ENCODE measurements at regions of chr13 and their contacts with region 1.

Region 1: GRCh38 chr13:79936368-79937136 is 404.4 kb downstream of the SPRY2 start:
- DNase-seq: peak; percentile 100
- H3K4me3 ChIP-seq: peak overlapping the region in 1 of 3 experiments; percentile 6
- H3K27ac ChIP-seq: peak overlapping the region; percentile 99
- H3K4me1 ChIP-seq: peaks cover 62% of the 10 kb centered on the region
- H3K27me3 ChIP-seq: no peaks in the 10 kb centered on the region
- CTCF ChIP-seq: no peak
- POLR2A ChIP-seq: no peak

Region 2: DNA sequence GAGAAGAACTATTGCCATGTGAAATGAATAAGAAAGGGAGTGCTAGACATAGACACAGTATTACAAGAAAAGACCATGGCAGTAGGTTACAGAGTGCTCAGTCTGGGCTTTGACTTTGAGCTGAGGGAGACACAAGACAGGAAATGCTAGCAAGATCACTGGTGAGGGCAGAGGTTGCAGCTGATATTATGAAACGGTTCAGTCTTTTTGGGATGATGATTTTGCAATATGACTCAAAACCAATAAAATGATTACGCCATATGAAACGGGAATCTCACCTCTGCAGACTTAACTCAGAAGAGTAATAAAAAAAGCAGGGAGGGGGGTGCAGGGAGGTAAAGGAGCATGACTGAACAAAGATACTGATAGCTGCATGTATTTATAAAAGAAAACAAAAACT is 653.6 kb before region 1 on chr13:
- CTCF ChIA-PET with region 1: no interaction called
- POLR2A ChIA-PET with region 1: no interaction called
- dilution Hi-C with region 1: no loop called
- intact Hi-C with region 1: no loop called
- DNase-seq: no peak
- H3K4me3 ChIP-seq: no peak overlapping the region
- H3K27ac ChIP-seq: no peak overlapping the region
- H3K4me1 ChIP-seq: no peaks in the 10 kb centered on the region
- H3K27me3 ChIP-seq: peaks cover 0 to 3% of the 10 kb centered on the region in 2 experiments
- CTCF ChIP-seq: no peak
- POLR2A ChIP-seq: no peak

Region 3: GRCh38 chr13:79724348-79725103 is 212.0 kb before region 1 on chr13:
- CTCF ChIA-PET with region 1: no interaction called
- POLR2A ChIA-PET with region 1: no interaction called
- dilution Hi-C with region 1: no loop called
- intact Hi-C with region 1: loop called (anchors 1 kb)
- DNase-seq: peak; percentile 93
- H3K4me3 ChIP-seq: no peak overlapping the region
- H3K27ac ChIP-seq: peak overlapping the region; percentile 24
- H3K4me1 ChIP-seq: peaks cover 3% of the 10 kb centered on the region
- H3K27me3 ChIP-seq: no peaks in the 10 kb centered on the region
- CTCF ChIP-seq: no peak
- POLR2A ChIP-seq: no peak

Region 4: DNA sequence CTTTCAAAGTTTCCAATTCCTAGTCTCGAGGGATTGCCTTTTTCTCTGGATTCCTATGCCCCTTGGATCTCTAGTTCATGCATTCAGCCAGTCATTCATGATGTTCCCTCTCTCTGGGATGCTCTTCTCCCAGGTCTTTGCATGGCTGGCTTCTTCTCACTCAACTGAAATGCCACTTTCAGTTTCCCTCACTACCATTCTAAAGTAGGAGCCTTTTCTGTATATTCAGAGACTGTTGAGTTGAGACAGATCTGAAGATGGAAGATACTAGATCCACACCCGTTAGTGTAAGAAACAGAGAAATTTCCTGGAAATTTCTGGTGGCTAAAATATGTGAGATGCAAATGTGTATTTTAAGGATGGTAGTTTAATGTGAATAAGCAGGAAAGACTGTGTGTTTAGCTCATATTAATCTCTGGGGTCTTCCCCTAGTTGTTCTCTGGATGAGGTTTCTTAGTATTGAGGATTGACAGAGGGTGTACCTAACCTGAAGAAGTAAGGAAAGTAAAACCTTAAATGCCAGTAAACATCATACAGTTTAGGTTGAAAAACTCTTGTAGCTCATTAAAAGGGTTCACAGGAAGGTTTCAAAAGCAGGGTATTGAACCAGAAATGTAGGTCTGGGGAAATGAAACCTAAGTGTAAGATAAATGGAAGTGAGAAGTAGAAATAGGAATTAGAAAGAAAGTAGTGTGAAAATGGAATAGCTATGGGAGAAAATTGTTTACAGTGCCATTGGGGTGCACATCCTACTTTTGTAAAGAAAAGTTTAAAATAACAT is 124.3 kb before region 1 on chr13:
- CTCF ChIA-PET with region 1: interaction called, 17 read pairs
- POLR2A ChIA-PET with region 1: interaction called, 11 read pairs
- dilution Hi-C with region 1: no loop called
- intact Hi-C with region 1: loop called (anchors 1 kb)
- DNase-seq: no peak
- H3K4me3 ChIP-seq: no peak overlapping the region
- H3K27ac ChIP-seq: no peak overlapping the region
- H3K4me1 ChIP-seq: peaks cover 27% of the 10 kb centered on the region
- H3K27me3 ChIP-seq: no peaks in the 10 kb centered on the region
- CTCF ChIP-seq: no peak
- POLR2A ChIP-seq: no peak

Region 5: DNA sequence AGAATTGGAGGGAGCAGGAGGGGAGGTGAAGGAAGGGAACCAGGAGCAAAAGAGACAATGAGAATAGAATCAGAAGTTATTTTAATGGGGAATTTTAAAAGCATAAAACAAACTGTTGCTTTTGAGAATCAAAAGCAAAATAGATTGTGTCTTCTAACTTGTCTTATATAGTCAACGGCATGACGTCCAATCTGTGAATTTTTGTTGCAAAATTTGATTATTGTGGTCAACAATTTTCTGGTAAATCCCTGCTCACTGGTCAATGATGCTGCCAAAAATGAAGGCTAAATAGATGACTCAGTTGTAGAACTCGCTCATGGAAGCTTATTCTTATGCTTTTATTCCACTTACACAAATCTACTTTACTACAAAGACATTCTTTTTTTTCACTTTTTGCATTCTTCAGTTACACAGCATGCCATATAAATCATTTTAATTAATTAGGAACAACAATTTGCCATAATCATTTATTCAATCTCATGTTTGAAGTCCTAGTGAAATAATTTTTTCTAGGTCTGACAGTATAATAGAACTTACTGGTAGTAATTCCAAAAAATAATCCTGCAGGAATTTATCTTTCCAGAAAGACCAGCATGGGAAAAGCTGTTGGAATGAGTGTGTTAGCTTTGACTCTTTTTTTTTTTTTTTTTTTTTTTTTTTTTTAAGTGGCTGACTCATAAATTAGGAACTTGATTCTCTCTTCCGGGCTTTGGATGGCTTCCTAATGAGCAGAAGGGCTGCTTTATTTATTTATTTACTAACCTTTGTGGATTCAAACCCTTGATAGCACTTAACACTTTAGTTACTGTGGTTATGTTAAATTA is 147.5 kb after region 1 on chr13:
- CTCF ChIA-PET with region 1: interaction called, 3 read pairs
- POLR2A ChIA-PET with region 1: no interaction called
- dilution Hi-C with region 1: no loop called
- intact Hi-C with region 1: loop called (anchors 1 kb)
- DNase-seq: peak; percentile 75
- H3K4me3 ChIP-seq: peak overlapping the region in 1 of 3 experiments; percentile 52
- H3K27ac ChIP-seq: peak overlapping the region; percentile 97
- H3K4me1 ChIP-seq: peaks cover 27% of the 10 kb centered on the region
- H3K27me3 ChIP-seq: no peaks in the 10 kb centered on the region
- CTCF ChIP-seq: no peak
- POLR2A ChIP-seq: no peak

Region 6: GRCh38 chr13:80235166-80235966 is 298.8 kb after region 1 on chr13:
- CTCF ChIA-PET with region 1: interaction called, 7 read pairs
- POLR2A ChIA-PET with region 1: no interaction called
- dilution Hi-C with region 1: no loop called
- intact Hi-C with region 1: loop called (anchors 1 kb)
- DNase-seq: peak; percentile 79
- H3K4me3 ChIP-seq: peak overlapping the region in 1 of 3 experiments; percentile 41
- H3K27ac ChIP-seq: peak overlapping the region; percentile 89
- H3K4me1 ChIP-seq: peaks cover 18% of the 10 kb centered on the region
- H3K27me3 ChIP-seq: no peaks in the 10 kb centered on the region
- CTCF ChIP-seq: no peak
- POLR2A ChIP-seq: no peak

Region 7: DNA sequence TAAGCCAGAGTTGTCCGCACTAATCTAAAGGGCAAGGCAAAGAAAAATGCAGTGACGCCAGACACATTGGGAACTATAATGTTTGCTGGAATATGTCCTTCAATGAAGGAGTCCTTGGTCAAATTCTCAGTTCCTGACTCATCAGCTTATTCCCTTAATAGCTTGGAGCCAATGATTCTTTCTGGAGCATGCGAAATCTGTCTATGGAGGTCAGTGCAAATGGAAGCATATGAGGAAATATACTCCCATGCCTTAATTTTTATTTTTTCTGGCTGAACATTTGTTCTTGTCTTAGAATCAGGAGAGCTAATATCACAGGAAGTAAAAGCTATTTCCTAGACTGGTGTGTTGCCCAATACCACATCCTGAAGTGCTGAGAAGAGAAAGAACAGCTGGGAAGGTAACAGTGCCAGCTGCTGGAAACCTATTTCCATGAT is 694.2 kb after region 1 on chr13:
- CTCF ChIA-PET with region 1: interaction called, 4 read pairs
- POLR2A ChIA-PET with region 1: no interaction called
- dilution Hi-C with region 1: no loop called
- intact Hi-C with region 1: loop called (anchors 2 kb)
- DNase-seq: peak; percentile 85
- H3K4me3 ChIP-seq: no peak overlapping the region
- H3K27ac ChIP-seq: peak overlapping the region; percentile 41
- H3K4me1 ChIP-seq: peaks cover 17% of the 10 kb centered on the region
- H3K27me3 ChIP-seq: no peaks in the 10 kb centered on the region
- CTCF ChIP-seq: no peak
- POLR2A ChIP-seq: no peak